Activated CD4-positive, alpha-beta memory T cell treated with anti-CD3 and anti-CD28 coated beads for 36 hours (primary cell): ENCODE measurements at regions of chr19 and their contacts with region 1.

Region 1: GRCh38 chr19:43754503-43755255 is at the start of gene SMG9:
- DNase-seq: peak; percentile 99
- H3K4me3 Mint-ChIP-seq: peak within 1 kb of the TSS; percentile 95
- H3K27ac Mint-ChIP-seq: peak within 1 kb of the TSS; percentile 99
- H3K4me1 Mint-ChIP-seq: peaks cover 63% of the 10 kb centered on the region
- H3K27me3 Mint-ChIP-seq: no peaks in the 10 kb centered on the region
- total RNA-seq, gene SMG9: 58.2 to 58.3 TPM

Region 2: GRCh38 chr19:43700395-43701000 is 54.2 kb before region 1 on chr19:
- CTCF ChIA-PET with region 1: no interaction called
- POLR2A ChIA-PET with region 1: no interaction called
- intact Hi-C with region 1: loop called (anchors 1 kb)
- DNase-seq: peak; percentile 37
- H3K4me3 Mint-ChIP-seq: peak overlapping the region; percentile 69
- H3K27ac Mint-ChIP-seq: peak overlapping the region; percentile 98
- H3K4me1 Mint-ChIP-seq: peaks cover 23% of the 10 kb centered on the region
- H3K27me3 Mint-ChIP-seq: no peaks in the 10 kb centered on the region

Region 3: GRCh38 chr19:43765109-43765876 is 10.6 kb after region 1 on chr19:
- CTCF ChIA-PET with region 1: interaction called, 108 read pairs
- POLR2A ChIA-PET with region 1: interaction called, 182 read pairs
- intact Hi-C with region 1: loop called (anchors 1 kb)
- DNase-seq: peak; percentile 96
- H3K4me3 Mint-ChIP-seq: peak overlapping the region; percentile 64
- H3K27ac Mint-ChIP-seq: peak overlapping the region; percentile 99
- H3K4me1 Mint-ChIP-seq: peaks cover 82% of the 10 kb centered on the region
- H3K27me3 Mint-ChIP-seq: peaks cover 1% of the 10 kb centered on the region

Region 4: GRCh38 chr19:43784981-43785808 is 30.5 kb after region 1 on chr19:
- CTCF ChIA-PET with region 1: interaction called, 20 read pairs
- POLR2A ChIA-PET with region 1: interaction called, 82 read pairs
- intact Hi-C with region 1: loop called (anchors 1 kb)
- DNase-seq: peak; percentile 70
- H3K4me3 Mint-ChIP-seq: peak overlapping the region; percentile 75
- H3K27ac Mint-ChIP-seq: peak overlapping the region; percentile 96
- H3K4me1 Mint-ChIP-seq: peaks cover 39% of the 10 kb centered on the region
- H3K27me3 Mint-ChIP-seq: peaks cover 1% of the 10 kb centered on the region

Region 5: GRCh38 chr19:43798546-43799409 is 44.1 kb after region 1 on chr19:
- CTCF ChIA-PET with region 1: no interaction called
- POLR2A ChIA-PET with region 1: no interaction called
- intact Hi-C with region 1: no loop called
- DNase-seq: peak; percentile 84
- H3K4me3 Mint-ChIP-seq: peak overlapping the region; percentile 67
- H3K27ac Mint-ChIP-seq: no peak overlapping the region
- H3K4me1 Mint-ChIP-seq: peaks cover 11% of the 10 kb centered on the region
- H3K27me3 Mint-ChIP-seq: peaks cover 2% of the 10 kb centered on the region